IMR-90 (cell line): ENCODE measurements at regions of chr3 and their contacts with region 1.

Region 1: DNA sequence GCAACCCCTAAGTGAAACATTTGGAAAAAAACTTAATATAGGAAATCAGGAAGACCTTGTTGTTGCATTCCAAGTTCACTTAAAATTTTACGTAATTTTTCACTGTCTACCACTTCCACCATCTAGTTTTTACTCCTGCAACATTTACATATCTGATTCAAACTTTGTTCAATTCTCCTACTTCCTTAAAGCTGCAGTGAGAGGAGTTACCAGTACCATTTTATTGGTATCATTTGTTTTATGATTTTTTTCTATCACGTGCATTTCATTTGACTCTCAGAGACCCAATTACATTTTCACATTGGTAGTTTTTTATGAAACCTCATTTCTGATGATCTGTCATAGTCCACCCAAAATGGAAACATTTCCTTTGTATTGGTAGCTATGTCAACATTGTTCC is 284.9 kb upstream of the MDFIC2 start:
- DNase-seq: no peak
- ATAC-seq: no peak
- H3K4me3 ChIP-seq: no peak overlapping the region
- H3K27ac ChIP-seq: no peak overlapping the region
- H3K4me1 ChIP-seq: no peaks in the 10 kb centered on the region
- H3K27me3 ChIP-seq: peaks cover 2% of the 10 kb centered on the region
- CTCF ChIP-seq: no peak
- POLR2A ChIP-seq: no peak
- RAD21 ChIP-seq: no peak

Region 2: DNA sequence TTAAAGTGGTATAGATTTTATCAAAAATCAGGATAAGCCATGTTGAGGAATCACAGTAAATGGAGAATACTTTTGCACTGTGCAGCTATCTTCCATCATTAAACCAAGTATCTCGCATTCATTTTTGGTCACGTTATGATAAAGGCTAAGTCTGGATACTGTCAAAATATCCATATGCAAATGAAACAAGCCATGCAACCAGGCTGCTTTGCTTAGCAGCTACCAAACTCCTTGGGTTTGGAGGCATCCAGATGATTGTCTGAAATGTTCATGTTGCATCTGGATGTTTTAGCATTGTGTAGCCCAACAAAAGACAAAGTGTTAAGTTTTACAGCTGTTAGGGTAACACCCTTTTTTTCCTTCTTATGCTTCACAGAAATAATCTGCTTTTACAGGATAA is 38.0 kb after region 1 on chr3:
- CTCF ChIA-PET with region 1: no interaction called
- POLR2A ChIA-PET with region 1: no interaction called
- dilution Hi-C with region 1: no loop called
- in situ Hi-C with region 1: no loop called
- intact Hi-C with region 1: loop called (anchors 5 kb)
- DNase-seq: no peak
- ATAC-seq: no peak
- H3K4me3 ChIP-seq: no peak overlapping the region
- H3K27ac ChIP-seq: no peak overlapping the region
- H3K4me1 ChIP-seq: no peaks in the 10 kb centered on the region
- H3K27me3 ChIP-seq: peaks cover 14% of the 10 kb centered on the region
- CTCF ChIP-seq: no peak
- POLR2A ChIP-seq: no peak
- RAD21 ChIP-seq: no peak

Region 3: GRCh38 chr3:70738307-70739033 is 141.2 kb after region 1 on chr3:
- CTCF ChIA-PET with region 1: no interaction called
- POLR2A ChIA-PET with region 1: no interaction called
- dilution Hi-C with region 1: no loop called
- in situ Hi-C with region 1: no loop called
- intact Hi-C with region 1: no loop called
- DNase-seq: no peak
- ATAC-seq: no peak
- H3K4me3 ChIP-seq: no peak overlapping the region
- H3K27ac ChIP-seq: no peak overlapping the region
- H3K4me1 ChIP-seq: peaks cover 1% of the 10 kb centered on the region; the same call in 1 of the 2 replicates
- H3K27me3 ChIP-seq: no peaks in the 10 kb centered on the region
- CTCF ChIP-seq: no peak
- POLR2A ChIP-seq: no peak
- RAD21 ChIP-seq: no peak

Region 4: GRCh38 chr3:71356265-71356664 is 759.0 kb after region 1 on chr3:
- CTCF ChIA-PET with region 1: no interaction called
- POLR2A ChIA-PET with region 1: no interaction called
- dilution Hi-C with region 1: no loop called
- in situ Hi-C with region 1: no loop called
- intact Hi-C with region 1: no loop called
- DNase-seq: no peak
- ATAC-seq: no peak
- H3K4me3 ChIP-seq: no peak overlapping the region
- H3K27ac ChIP-seq: no peak overlapping the region
- H3K4me1 ChIP-seq: no peaks in the 10 kb centered on the region
- H3K27me3 ChIP-seq: no peaks in the 10 kb centered on the region
- CTCF ChIP-seq: no peak
- POLR2A ChIP-seq: no peak
- RAD21 ChIP-seq: no peak